Esophagus muscularis mucosa (tissue), 4 donors: ENCODE measurements at regions of chr2 and their contacts with region 1.

Region 1: GRCh38 chr2:148565272-148565894 is 79.2 kb upstream of the EPC2 start:
- DNase-seq: no peak
- H3K4me3 ChIP-seq: no peak overlapping the region
- H3K27ac ChIP-seq: no peak overlapping the region
- H3K4me1 ChIP-seq: no peaks in the 10 kb centered on the region
- H3K27me3 ChIP-seq: no peaks in the 10 kb centered on the region
- CTCF ChIP-seq: peak; percentile 18 to 33 (median 21)
- EP300 ChIP-seq: no peak
- POLR2A ChIP-seq: no peak

Region 2: DNA sequence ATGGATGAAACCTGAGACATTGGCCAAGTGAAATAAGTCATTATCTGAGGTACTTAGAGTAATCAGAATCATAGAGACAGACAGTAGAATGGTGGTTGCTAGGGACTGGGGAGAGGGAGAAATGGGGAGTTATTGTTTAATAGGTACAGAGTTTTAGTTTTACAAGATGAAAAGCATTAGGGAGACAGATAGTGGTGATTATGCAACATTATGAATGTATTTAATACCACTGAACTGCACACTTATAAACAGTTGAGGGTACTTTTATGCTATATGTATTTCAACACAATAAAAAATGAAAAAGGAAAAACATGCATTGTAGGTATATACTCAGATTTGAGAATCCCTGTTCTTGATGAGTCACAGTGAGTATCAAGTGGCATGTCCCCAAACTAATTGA is 138.9 kb after region 1 on chr2:
- intact Hi-C with region 1: no loop called
- DNase-seq: no peak
- H3K4me3 ChIP-seq: no peak overlapping the region
- H3K27ac ChIP-seq: no peak overlapping the region
- H3K4me1 ChIP-seq: no peaks in the 10 kb centered on the region
- H3K27me3 ChIP-seq: no peaks in the 10 kb centered on the region
- CTCF ChIP-seq: no peak
- EP300 ChIP-seq: no peak
- POLR2A ChIP-seq: no peak

Region 3: DNA sequence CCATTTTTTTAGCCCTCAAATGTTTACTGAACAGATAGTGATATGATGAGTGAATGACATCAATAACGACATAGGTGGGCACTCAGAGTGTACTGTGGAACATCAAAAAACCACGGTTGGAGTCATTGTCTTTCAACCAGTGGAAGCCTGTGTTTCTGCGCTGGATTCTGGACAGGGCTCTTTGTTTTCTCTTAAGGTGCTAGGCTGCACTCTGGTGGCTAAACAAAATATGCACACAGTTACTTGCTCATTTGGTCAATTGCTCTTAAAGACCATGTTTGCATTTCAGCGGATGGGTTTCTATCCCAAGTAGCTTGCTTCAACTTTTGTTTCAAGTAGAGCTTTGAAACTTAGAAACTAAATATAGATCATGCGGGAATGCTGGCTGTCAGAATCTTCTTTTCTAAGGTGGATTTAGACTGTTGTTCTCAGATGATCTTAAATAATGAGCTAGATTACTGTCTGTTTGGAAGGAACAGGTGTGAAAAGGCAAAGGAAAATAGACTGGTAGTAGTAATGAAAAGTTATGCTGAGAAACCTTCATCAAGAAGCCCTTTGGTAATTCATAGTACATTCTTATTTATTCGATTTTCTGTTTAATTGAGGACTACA is 424.6 kb after region 1 on chr2:
- intact Hi-C with region 1: loop called (anchors 5 kb)
- DNase-seq: no peak
- H3K4me3 ChIP-seq: no peak overlapping the region
- H3K27ac ChIP-seq: no peak overlapping the region
- H3K4me1 ChIP-seq: peaks cover 0 to 5% (median 0%) of the 10 kb centered on the region in 4 donors
- H3K27me3 ChIP-seq: peaks cover 0 to 3% (median 0%) of the 10 kb centered on the region in 4 donors
- CTCF ChIP-seq: peak; percentile 64 to 77 (median 65)
- EP300 ChIP-seq: no peak
- POLR2A ChIP-seq: no peak